ENCODE measurements at regions of chr1 and their contacts with region 1.

Region 1: GRCh38 chr1:56803561-56804156 is 15.5 kb downstream of the FYB2 start:
- DNase-seq: peak; percentile 34
- H3K4me3 ChIP-seq: no peak overlapping the region
- H3K27ac ChIP-seq: no peak overlapping the region
- H3K4me1 ChIP-seq: no peaks in the 10 kb centered on the region; a peak in 1 of 4 replicates
- H3K27me3 ChIP-seq: no peaks in the 10 kb centered on the region
- CTCF ChIP-seq: peak; percentile 58
- EP300 ChIP-seq: no peak
- RAD21 ChIP-seq: peak; percentile 57

Region 2: DNA sequence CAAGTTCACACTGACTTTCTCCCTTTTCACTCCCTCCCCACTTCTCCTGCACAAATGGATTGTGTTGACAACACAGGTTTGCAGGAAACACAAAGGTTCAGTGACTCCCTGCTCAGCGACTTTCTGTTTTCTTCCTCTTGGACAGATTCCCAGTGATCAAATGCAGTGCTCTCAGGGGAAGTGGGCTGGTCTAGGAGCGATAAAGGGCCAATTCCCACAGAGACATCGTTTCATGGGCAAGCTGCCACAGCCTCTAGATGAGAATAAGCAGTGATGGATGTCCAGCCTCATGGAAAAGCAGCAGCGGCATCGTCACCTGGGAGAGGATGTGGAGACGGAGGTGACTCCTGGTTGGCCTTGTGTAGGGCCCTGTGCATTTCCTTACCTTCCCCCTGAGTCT is 15.1 kb before region 1 on chr1:
- CTCF ChIA-PET with region 1: interaction called, 16 read pairs
- POLR2A ChIA-PET with region 1: no interaction called
- DNase-seq: peak; percentile 9
- H3K4me3 ChIP-seq: no peak overlapping the region
- H3K27ac ChIP-seq: peak overlapping the region in 1 of 2 experiments; percentile 55; a peak in 2 of 4 replicates
- H3K4me1 ChIP-seq: peaks cover 0 to 12% of the 10 kb centered on the region in 2 experiments; a peak in 2 of 4 replicates
- H3K27me3 ChIP-seq: no peaks in the 10 kb centered on the region
- CTCF ChIP-seq: no peak
- EP300 ChIP-seq: no peak
- RAD21 ChIP-seq: no peak

Measured in SK-N-SH (cell line).